Esophagus muscularis mucosa (tissue), 4 donors: ENCODE measurements at regions of chr6 and their contacts with region 1.

Region 1: GRCh38 chr6:10694302-10695085 is at the starts of genes C6orf52 and PAK1IP1:
- DNase-seq: peak; percentile 97
- H3K4me3 ChIP-seq: peak within 1 kb of the TSS; percentile 64 to 93 (median 86)
- H3K27ac ChIP-seq: peak within 1 kb of the TSS; percentile 89 to 93 (median 90)
- H3K4me1 ChIP-seq: peaks cover 25 to 36% (median 28%) of the 10 kb centered on the region in 4 donors
- H3K27me3 ChIP-seq: no peaks in the 10 kb centered on the region
- CTCF ChIP-seq: peak in 1 of 3 experiments; percentile 6
- EP300 ChIP-seq: peak; percentile 8
- POLR2A ChIP-seq: peak; percentile 83
- total RNA-seq, gene C6orf52: 0.71 to 1.2 TPM in 2 of 4 donors, not detected in the others
- total RNA-seq, gene PAK1IP1: 9.4 to 17.9 (median 11.4) TPM

Region 2: DNA sequence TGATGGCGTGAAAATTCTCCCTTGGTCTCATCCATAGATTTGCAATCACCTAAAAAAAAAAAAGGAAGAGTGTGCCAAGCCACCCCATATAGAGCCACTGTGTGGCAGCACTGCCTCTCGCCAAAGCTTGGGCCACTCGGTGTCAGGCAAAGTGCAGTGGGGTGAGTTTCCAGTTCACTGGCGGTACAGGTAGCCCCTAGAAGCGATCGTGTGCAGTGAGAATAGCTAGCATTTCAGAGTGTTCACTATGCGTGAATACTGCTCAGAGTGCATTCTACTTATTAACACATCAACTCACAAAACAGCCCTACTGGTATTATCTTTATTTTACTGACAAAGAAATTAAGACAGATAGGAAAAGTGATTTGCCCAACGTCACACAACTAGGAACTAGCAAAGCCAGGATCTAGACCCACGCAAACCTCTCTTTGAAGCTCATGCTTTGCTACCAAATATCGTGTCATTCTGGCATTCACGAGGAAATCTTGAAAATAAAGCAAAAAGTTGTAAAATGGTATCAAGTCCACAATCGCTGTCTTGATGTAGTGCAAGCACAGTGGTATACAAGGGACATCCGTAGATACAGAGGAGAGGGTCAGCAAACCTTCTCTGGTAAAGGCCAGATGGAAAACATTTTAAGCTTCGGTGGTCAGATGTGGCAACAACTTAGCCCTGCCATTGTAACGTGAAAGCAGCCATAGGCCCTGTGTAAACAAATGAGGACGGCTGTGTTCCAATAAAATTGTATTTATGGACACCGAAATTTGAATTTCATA is 183.7 kb before region 1 on chr6:
- intact Hi-C with region 1: loop called (anchors 1 kb)
- DNase-seq: no peak
- H3K4me3 ChIP-seq: peak overlapping the region; percentile 4 to 22 (median 20)
- H3K27ac ChIP-seq: peak overlapping the region; percentile 68 to 74 (median 70)
- H3K4me1 ChIP-seq: peaks cover 14 to 19% (median 18%) of the 10 kb centered on the region in 4 donors
- H3K27me3 ChIP-seq: no peaks in the 10 kb centered on the region
- CTCF ChIP-seq: peak; percentile 71 to 78 (median 74)
- EP300 ChIP-seq: no peak
- POLR2A ChIP-seq: no peak

Region 3: GRCh38 chr6:10626154-10626741 is 68.2 kb before region 1 on chr6:
- intact Hi-C with region 1: loop called (anchors 5 kb)
- DNase-seq: no peak
- H3K4me3 ChIP-seq: no peak overlapping the region
- H3K27ac ChIP-seq: peak overlapping the region in 1 of 4 donors; percentile 27
- H3K4me1 ChIP-seq: peaks cover 7 to 17% (median 9%) of the 10 kb centered on the region in 4 donors
- H3K27me3 ChIP-seq: no peaks in the 10 kb centered on the region
- CTCF ChIP-seq: no peak
- EP300 ChIP-seq: no peak
- POLR2A ChIP-seq: no peak

Region 4: DNA sequence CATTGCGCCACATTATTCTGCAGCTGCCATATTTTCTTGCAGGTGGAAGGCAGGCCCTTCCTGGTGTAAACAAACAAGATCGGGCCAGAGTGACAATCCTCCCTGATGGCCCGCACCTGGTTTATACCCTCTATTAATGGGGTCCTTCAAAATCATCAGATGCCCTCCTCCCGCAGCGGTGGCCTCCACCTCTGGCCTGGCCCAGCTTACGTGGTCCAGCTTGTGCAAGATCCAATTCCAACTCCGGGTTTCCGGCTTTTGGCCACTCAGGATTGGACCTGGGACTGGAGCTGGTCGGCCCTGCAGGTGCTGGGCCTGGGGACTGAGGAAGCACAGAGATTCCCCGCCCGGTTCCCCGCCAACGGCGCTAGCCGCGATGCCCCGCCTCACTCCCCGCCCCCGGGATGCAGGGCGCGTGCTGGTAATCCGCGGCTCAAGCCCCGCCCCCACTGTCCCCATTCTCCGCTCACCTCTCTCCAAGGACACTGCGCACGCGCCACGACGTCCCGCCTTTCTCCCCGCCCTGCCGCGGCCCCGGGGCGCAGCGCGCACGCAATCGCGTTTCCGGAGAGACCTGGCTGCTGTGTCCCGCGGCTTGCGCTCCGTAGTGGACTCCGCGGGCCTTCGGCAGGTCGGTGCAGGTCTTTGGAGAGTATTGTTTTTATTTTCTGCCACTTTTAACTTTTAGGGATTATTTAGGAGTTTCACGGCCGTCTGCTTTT is 52.9 kb after region 1 on chr6 and contains the start of gene TMEM14B:
- intact Hi-C with region 1: loop called (anchors 2 kb)
- DNase-seq: peak; percentile 100
- H3K4me3 ChIP-seq: peak within 1 kb of the TSS; percentile 69 to 86 (median 70)
- H3K27ac ChIP-seq: peak within 1 kb of the TSS; percentile 81 to 88 (median 83)
- H3K4me1 ChIP-seq: peaks cover 29 to 41% (median 34%) of the 10 kb centered on the region in 4 donors
- H3K27me3 ChIP-seq: no peaks in the 10 kb centered on the region
- CTCF ChIP-seq: no peak
- EP300 ChIP-seq: no peak
- POLR2A ChIP-seq: peak; percentile 52
- total RNA-seq, gene TMEM14B: 35.4 to 77.2 (median 66.2) TPM